Adrenal gland (tissue), 19 donors: ENCODE measurements at regions of chr1 and their contacts with region 1.

Region 1: GRCh38 chr1:243325305-243325890 is 69.6 kb downstream of the SDCCAG8 start:
- DNase-seq: peak in 1 of 7 donors; percentile 38
- H3K4me3 ChIP-seq: no peak overlapping the region
- H3K27ac ChIP-seq: no peak overlapping the region
- H3K4me1 ChIP-seq: no peaks in the 10 kb centered on the region
- H3K27me3 ChIP-seq: no peaks in the 10 kb centered on the region
- CTCF ChIP-seq: peak; percentile 62 to 86 (median 78)
- POLR2A ChIP-seq: no peak

Region 2: DNA sequence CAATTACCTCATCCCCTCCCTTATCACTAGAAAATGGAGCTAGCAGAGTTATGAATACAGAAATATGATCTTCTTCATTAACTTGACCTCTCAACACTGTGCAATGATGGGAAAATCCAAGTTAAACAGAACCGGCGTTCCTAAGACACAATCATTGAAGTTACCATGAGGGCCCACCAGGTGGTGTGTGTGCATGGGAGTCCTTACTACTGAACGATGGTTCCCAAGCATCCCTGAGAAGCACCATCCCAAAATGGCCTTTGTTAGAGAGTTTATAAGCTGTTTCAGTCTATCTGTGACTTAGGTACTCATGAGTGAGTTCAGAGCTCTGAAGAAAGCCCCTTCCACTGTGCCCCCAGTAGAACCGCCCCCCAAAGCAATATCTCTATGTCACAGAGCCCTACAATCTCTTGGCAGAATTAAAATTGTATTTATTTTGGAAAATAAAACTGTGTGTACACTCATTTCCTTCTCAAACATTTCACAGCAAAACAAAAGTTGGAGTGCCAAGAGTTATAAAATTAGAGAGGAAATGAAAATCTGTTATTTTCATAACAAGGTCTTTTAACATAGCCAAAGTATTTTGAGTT is 857.7 kb before region 1 on chr1:
- intact Hi-C with region 1: loop called in 1 of 2 experiments (anchors 10 kb)
- DNase-seq: peak; percentile 45 to 80 (median 61)
- H3K4me3 ChIP-seq: no peak overlapping the region
- H3K27ac ChIP-seq: no peak overlapping the region
- H3K4me1 ChIP-seq: no peaks in the 10 kb centered on the region
- H3K27me3 ChIP-seq: no peaks in the 10 kb centered on the region
- CTCF ChIP-seq: peak; percentile 38 to 67 (median 60)
- POLR2A ChIP-seq: no peak